OCI-LY7 (cell line): ENCODE measurements at regions of chr2 and their contacts with region 1.

Region 1: DNA sequence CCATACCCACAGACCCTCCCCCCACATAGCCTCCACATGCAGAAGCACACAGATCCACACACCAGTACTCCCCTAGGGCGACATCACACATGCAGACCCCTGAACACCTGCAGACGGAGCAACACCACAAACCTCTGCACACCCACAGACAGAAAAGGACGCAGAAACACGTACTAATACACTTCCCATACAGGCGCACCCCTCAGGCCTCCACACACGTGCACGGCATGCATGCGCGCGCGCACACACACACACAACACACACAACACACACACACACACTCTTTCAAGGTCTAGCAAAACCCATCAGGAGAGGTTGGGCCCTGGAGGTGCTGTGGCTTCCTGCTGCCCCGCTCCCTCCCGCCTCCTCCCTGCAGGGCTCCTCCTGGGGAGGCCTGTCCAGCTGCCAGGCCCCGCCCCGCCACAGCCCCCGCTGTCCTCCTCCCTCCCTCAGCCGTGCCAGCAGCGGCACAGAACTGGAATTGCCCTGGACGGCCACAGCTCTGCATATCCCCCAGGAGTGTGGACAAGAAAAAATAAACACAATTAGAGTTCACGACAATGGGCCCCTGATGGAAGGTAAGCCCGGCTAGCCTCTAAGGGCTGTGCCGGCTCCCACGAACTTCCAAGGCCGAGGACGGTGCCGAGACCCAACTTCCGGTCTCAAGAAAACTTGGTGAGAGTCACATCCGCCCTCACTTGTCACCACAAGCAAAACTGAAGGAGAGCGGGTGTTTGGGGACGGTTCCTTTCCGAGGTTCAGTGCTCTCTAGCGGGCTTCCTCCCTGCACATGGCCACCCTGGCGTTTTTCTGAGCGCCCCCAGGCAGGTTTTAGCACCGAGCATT is 6.8 kb downstream of the ZFP36L2 start:
- DNase-seq: peak; percentile 94
- H3K4me3 ChIP-seq: peak overlapping the region; percentile 89
- H3K27ac ChIP-seq: peak overlapping the region; percentile 91
- H3K4me1 ChIP-seq: peaks cover 67% of the 10 kb centered on the region
- CTCF ChIP-seq: no peak; the same call in 1 of the 2 replicates

Region 2: DNA sequence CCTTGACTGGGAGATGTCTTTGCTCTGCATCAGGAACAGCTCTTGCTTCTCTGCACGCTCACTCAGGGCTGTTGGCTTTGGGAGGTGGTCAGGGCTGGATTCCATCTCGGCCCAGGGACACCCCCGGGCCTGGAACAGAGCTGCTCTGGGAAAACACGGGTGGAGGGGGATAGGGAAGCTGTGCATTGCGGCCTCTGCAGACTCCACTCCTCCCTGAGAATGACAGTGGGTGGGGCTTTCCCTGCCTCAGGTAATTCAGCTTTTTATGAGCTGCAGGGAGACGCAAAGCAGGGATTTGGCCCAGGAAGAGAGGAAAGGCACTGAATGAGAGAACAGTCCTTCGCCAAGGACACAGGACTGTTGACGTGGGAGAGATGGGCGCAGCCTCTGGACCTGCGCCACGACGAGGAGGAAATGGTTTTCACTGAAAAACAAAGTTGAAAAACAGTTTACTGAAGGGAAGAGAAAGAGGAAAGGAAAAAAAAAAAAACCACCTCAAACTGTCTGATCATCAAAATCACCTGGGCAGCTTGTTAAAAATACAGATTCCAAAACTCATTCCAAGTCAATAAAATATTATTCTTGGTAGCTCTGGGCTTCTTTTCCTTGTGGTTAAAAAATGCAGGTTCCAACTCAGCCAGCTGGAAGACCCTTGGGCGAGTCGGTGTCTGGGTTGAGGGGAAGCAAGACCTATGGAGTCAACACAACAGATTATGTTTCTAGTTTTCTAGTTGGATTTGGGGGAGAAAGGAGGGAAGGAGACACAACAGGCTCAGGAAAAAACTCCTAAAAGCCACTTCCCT is 187.2 kb before region 1 on chr2:
- CTCF ChIA-PET with region 1: no interaction called
- POLR2A ChIA-PET with region 1: no interaction called
- intact Hi-C with region 1: no loop called
- DNase-seq: no peak
- H3K4me3 ChIP-seq: no peak overlapping the region
- H3K27ac ChIP-seq: no peak overlapping the region
- H3K4me1 ChIP-seq: no peaks in the 10 kb centered on the region
- CTCF ChIP-seq: no peak

Region 3: DNA sequence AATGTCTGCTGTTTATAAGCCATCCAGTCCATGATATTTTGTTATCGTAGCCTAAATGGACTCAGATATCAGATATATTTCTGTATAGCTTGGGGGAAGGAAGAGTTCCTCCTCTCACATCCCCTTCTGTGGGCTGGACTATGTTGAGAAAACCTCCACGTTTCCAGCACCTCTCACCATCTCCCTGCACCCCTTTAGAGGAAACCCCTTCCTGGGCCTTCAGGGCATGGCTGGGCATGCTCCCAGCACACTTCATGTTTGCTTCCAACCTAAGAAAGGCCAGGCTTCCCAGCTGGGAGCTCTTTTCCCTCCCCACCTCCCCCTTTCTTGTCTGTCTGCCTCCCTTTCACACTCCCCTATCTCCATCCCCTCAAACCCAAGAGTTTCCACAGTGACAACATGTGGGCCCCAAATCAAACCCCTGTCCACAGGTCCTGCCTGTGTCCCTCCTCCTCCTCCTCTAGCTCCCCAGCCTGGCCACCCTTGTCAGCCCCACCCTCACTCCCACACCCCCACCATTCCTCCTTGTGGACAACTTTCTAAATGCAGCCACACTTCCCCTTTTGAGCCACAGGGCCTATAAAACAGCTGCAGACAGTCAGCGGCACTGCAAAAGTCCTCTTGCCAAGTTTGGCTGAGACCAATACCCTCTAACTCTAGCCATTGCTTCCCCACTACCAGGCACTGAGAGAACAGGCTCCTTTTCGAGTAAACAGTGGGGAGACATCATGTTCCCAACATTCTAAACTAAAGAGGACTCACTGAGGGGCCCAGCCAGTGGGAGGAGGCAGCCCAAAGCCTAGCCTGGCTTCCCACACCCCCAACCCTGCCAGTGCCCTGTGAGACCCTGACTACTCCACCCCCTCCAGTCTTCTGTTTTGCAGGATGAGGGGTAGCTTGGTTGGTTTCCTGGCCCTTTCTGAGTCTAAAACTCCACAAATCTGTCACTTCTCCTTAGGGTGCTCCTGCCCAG is 113.7 kb before region 1 on chr2:
- CTCF ChIA-PET with region 1: no interaction called
- POLR2A ChIA-PET with region 1: no interaction called
- intact Hi-C with region 1: no loop called
- DNase-seq: peak; percentile 75
- H3K4me3 ChIP-seq: no peak overlapping the region
- H3K27ac ChIP-seq: no peak overlapping the region
- H3K4me1 ChIP-seq: peaks cover 34% of the 10 kb centered on the region
- CTCF ChIP-seq: 0 out of 2 replicates have a peak, but pooled peaks have one; percentile 18

Region 4: GRCh38 chr2:43194121-43194869 is 25.3 kb before region 1 on chr2:
- CTCF ChIA-PET with region 1: interaction called, 3 read pairs
- POLR2A ChIA-PET with region 1: interaction called, 7 read pairs
- intact Hi-C with region 1: loop called (anchors 1 kb)
- DNase-seq: no peak
- H3K4me3 ChIP-seq: peak overlapping the region; percentile 33
- H3K27ac ChIP-seq: peak overlapping the region; percentile 71
- H3K4me1 ChIP-seq: peaks cover 48% of the 10 kb centered on the region
- CTCF ChIP-seq: no peak